ENCODE measurements at regions of chr10 and their contacts with region 1.

Region 1: GRCh38 chr10:21681156-21681555 is 147.1 kb downstream of the MLLT10 start:
- DNase-seq: no peak
- H3K4me3 ChIP-seq: no peak overlapping the region
- CTCF ChIP-seq: no peak

Region 2: GRCh38 chr10:21724695-21725367 is 43.7 kb after region 1 on chr10:
- in situ Hi-C with region 1: loop called (anchors 5 kb)
- DNase-seq: peak; percentile 100
- H3K4me3 ChIP-seq: no peak overlapping the region
- CTCF ChIP-seq: no peak

Region 3: DNA sequence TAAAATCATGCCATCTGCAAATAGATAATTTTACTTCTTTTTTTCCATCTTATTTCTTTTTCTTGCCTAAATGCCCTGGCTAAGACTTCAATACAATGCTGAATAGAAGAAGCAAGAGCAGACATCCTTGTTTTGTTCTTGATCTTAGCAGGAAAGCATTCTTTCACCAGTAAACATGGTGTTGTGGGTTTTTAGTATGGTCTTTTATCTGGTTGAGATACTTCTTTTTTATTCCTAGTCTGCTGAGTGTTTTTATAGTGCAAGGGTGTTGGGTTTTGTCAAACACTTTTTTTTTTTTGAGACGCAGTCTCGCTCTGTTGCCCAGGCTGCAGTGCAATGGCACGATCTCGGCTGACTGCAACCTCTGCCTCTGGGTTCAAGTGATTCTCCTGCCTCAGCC is 90.1 kb after region 1 on chr10:
- in situ Hi-C with region 1: no loop called
- DNase-seq: no peak
- H3K4me3 ChIP-seq: no peak overlapping the region
- CTCF ChIP-seq: no peak

Measured in astrocyte of the cerebellum (primary cell).